Activated CD8-positive, alpha-beta T cell treated with anti-CD3 and anti-CD28 coated beads, Interleukin-2, amount 10 ng/mL, durations not matched to agents 7 days and 5 days (primary cell): ENCODE measurements at regions of chr10 and their contacts with region 1.

Region 1: GRCh38 chr10:70363971-70364771 is 18.3 kb downstream of the LRRC20 start:
- DNase-seq: peak; percentile 92
- ATAC-seq: peak; percentile 99
- H3K4me3 Mint-ChIP-seq: no peak overlapping the region
- H3K27ac Mint-ChIP-seq: peak overlapping the region; percentile 65
- H3K4me1 Mint-ChIP-seq: peaks cover 16% of the 10 kb centered on the region
- H3K27me3 Mint-ChIP-seq: no peaks in the 10 kb centered on the region

Region 2: GRCh38 chr10:70197235-70197945 is 166.8 kb before region 1 on chr10:
- CTCF ChIA-PET with region 1: interaction called, 11 read pairs
- POLR2A ChIA-PET with region 1: no interaction called
- DNase-seq: peak; percentile 71
- ATAC-seq: peak; percentile 79
- H3K4me3 Mint-ChIP-seq: peak overlapping the region; percentile 25
- H3K27ac Mint-ChIP-seq: peak overlapping the region; percentile 79
- H3K4me1 Mint-ChIP-seq: peaks cover 47% of the 10 kb centered on the region
- H3K27me3 Mint-ChIP-seq: no peaks in the 10 kb centered on the region

Region 3: DNA sequence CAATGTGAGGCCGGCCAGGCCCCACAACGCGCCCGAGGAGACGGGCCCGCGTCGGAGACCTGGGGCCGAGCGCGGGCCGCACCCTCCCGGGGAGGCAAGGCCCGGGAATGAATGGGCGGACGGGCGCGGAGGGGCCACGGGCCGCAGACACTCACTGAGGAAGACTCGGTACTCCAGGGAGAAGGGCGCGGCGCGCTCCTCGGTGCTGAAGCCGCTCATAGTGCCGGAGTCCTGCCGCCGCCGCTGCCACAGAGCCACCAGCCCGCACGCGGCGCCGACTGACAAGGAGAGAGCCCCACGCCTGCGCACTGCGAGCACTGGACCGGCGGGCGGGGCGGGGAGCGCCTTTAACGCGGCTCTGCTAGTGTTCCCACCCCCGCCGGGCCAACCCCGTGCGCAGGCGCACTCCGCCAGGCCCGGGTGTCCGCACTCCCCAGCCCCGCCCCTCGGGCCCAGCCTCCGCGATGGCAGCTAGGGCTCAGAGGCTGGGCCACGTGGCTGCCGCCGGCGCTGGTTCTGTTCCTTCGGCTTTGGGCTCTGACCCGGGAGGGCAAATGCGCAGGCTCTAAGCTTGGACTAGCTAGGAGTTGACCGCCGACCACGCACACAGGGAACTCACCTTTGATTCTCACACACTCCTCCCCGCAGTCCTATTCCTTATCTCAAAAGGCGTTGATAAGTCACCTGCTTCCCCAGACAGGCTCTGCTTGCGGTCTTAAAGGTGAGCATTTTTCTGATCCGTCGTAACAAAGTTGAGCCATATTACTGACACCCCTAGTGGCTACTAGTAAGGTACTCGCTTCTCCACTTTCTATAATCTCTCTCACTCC is 130.8 kb before region 1 on chr10 and contains the start of gene PPA1:
- CTCF ChIA-PET with region 1: interaction called, 688 read pairs
- POLR2A ChIA-PET with region 1: interaction called, 13 read pairs
- DNase-seq: peak; percentile 99
- ATAC-seq: peak; percentile 93
- H3K4me3 Mint-ChIP-seq: peak within 1 kb of the TSS; percentile 78
- H3K27ac Mint-ChIP-seq: peak within 1 kb of the TSS; percentile 79
- H3K4me1 Mint-ChIP-seq: peaks cover 45% of the 10 kb centered on the region
- H3K27me3 Mint-ChIP-seq: peaks cover 2% of the 10 kb centered on the region
- total RNA-seq, gene PPA1: 175 TPM

Region 4: DNA sequence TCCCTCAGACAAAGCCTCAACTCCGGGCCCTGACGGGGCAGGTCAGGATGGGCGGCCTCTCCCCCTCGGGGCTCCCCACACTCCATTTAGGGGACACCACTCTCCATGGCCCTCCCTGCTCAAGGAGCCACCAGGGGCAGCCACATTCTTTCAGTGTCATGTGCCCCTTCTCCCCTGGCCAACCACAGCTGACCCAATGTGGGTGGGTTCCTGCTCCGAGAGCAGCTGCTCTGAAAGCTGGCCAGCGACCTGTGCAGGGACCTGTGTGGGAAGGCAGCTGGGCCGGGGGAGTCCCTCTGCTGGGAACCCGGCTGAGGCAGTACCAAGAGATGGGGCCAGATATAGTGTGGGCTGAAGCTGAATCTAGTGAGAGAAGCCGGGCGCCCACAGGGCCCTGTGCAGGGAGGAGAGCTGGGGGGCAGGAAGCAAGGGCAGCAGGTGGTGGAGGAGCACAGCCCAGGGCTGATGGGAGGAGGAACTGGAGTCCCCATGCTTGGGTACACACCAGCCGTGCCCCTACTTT is 39.8 kb before region 1 on chr10:
- CTCF ChIA-PET with region 1: interaction called, 18 read pairs
- POLR2A ChIA-PET with region 1: interaction called, 3 read pairs
- DNase-seq: peak; percentile 50
- ATAC-seq: peak; percentile 53
- H3K4me3 Mint-ChIP-seq: peak overlapping the region; percentile 29
- H3K27ac Mint-ChIP-seq: peak overlapping the region; percentile 96
- H3K4me1 Mint-ChIP-seq: peaks cover 55% of the 10 kb centered on the region
- H3K27me3 Mint-ChIP-seq: no peaks in the 10 kb centered on the region

Region 5: DNA sequence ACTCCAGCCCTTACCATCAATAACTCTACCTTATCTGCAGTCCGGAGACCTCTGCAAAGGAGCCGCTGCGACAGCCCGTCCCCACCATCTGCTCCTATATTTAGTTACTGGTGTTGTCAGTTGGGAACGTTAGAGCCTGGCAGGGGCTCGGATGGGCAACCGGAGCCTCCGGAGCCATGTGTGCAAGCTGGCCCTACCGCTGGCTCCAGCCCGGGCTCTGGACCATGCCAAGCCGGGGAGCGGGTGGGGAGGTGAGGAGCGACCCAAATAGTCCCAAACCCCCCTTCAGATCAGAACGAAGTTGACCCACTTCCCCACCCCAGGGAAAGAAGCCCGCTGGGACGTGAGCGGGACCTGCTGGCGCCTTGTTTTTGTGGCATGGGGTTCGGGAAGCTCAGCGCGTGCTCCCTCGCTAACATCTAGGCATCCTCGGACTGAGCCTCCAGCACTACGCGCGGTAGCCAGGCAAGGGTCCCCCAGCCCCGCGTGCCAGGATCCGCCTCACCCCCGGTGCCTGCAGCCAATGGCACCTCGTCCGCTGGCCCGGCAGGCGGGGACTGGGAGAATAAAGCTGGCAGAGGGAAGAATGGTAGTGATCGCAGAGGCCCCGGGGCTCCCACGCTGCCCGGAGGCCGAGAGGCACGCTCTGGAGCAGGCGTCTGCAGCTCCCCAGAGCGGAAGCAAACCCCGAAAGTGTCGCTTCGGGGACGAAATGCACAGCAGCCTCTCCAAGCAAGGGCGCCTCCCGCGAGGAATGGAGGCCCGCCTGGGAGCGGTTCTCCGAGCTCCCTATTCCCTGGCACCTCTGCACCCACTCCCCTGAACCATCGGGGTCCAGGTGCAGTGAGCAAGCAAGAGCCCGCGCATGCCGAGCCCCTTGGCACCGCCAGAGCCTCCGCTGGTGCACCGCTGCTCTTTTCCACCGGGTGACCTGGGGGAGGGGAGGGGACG is 17.6 kb after region 1 on chr10:
- CTCF ChIA-PET with region 1: interaction called, 31 read pairs
- POLR2A ChIA-PET with region 1: no interaction called
- DNase-seq: peak; percentile 60
- ATAC-seq: peak; percentile 47
- H3K4me3 Mint-ChIP-seq: peak overlapping the region; percentile 83
- H3K27ac Mint-ChIP-seq: peak overlapping the region; percentile 60
- H3K4me1 Mint-ChIP-seq: peaks cover 23% of the 10 kb centered on the region
- H3K27me3 Mint-ChIP-seq: peaks cover 14% of the 10 kb centered on the region